Endothelial cell of umbilical vein (primary cell): ENCODE measurements at regions of chr14 and their contacts with region 1.

Region 1: DNA sequence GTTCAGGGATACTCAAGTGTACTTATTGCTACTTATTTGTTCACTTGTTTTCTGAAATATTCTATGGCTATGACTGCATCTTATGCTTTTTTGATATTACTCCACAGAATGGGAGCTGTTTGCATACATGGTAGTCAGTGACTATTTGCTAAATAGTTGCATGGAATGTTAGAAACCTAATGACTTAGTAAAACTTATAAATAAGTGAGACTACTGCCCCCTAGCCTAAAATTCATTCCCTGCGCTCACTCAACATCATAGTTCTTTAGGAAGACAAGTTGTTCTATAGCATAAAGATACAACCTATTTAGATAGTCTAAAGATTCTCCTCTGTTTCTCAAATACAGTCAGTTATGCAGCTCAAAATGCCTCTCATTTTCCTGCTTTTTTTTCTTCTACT is 305.5 kb downstream of the CEP128 start:
- DNase-seq: no peak
- H3K4me3 ChIP-seq: no peak overlapping the region
- H3K27ac ChIP-seq: no peak overlapping the region
- H3K4me1 ChIP-seq: peaks cover 38% of the 10 kb centered on the region
- H3K27me3 ChIP-seq: no peaks in the 10 kb centered on the region
- CTCF ChIP-seq: peak in 1 of 2 donors; percentile 11
- POLR2A ChIP-seq: no peak

Region 2: DNA sequence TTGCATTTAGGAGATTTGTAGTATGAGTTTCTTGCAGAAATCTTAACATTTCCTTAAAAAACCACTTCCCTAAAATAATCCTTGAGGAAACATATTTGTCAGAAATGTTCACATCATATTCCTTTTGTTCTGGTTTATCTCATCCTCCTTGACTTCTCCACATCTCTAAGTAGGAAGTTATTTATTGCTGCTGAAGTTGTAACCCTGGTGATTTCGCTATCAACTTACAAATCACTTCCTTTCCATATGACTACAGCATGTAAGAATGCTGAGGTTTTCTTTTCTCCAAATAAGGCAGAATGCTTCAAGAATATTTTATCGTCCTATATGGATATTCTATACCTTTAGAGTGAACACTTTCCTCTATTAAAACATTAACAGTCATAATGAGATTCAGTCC is 1714.2 kb before region 1 on chr14:
- CTCF ChIA-PET with region 1: no interaction called
- POLR2A ChIA-PET with region 1: no interaction called
- dilution Hi-C with region 1: no loop called
- intact Hi-C with region 1: loop called (anchors 1 kb)
- DNase-seq: peak; percentile 92
- H3K4me3 ChIP-seq: peak overlapping the region in 1 of 3 experiments; percentile 19
- H3K27ac ChIP-seq: peak overlapping the region; percentile 82
- H3K4me1 ChIP-seq: peaks cover 33% of the 10 kb centered on the region
- H3K27me3 ChIP-seq: no peaks in the 10 kb centered on the region
- CTCF ChIP-seq: no peak
- POLR2A ChIP-seq: peak; percentile 61

Region 3: DNA sequence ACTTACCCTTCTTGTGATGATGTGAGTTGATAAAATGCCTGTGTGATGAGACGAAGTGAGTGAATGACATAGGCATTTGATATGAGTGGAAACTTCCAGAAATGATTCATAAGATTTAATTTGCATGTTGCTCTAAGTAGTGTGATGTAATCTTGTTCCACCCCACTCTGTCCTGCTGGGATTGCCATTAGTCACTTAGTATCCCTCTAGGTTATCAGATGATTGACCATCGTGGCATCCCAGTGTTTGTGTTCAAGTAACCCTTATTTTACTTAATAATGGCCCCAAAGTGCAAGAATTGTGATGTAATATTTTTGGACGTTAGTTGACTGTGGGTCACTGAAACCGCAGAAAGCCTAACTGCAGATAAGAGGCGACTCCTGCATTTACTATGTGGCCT is 210.4 kb before region 1 on chr14:
- CTCF ChIA-PET with region 1: no interaction called
- POLR2A ChIA-PET with region 1: no interaction called
- dilution Hi-C with region 1: no loop called
- intact Hi-C with region 1: loop called (anchors 1 kb)
- DNase-seq: peak; percentile 85
- H3K4me3 ChIP-seq: no peak overlapping the region
- H3K27ac ChIP-seq: peak overlapping the region; percentile 48
- H3K4me1 ChIP-seq: peaks cover 17% of the 10 kb centered on the region
- H3K27me3 ChIP-seq: no peaks in the 10 kb centered on the region
- CTCF ChIP-seq: no peak
- POLR2A ChIP-seq: no peak

Region 4: GRCh38 chr14:80664576-80664975 is 28.5 kb after region 1 on chr14:
- CTCF ChIA-PET with region 1: no interaction called
- POLR2A ChIA-PET with region 1: no interaction called
- dilution Hi-C with region 1: no loop called
- intact Hi-C with region 1: loop called (anchors 2 kb)
- DNase-seq: peak; percentile 49
- H3K4me3 ChIP-seq: no peak overlapping the region
- H3K27ac ChIP-seq: peak overlapping the region; percentile 24
- H3K4me1 ChIP-seq: peaks cover 15% of the 10 kb centered on the region
- H3K27me3 ChIP-seq: no peaks in the 10 kb centered on the region
- CTCF ChIP-seq: no peak
- POLR2A ChIP-seq: no peak

Region 5: GRCh38 chr14:81220830-81221578 is 584.9 kb after region 1 on chr14 and contains the start of gene GTF2A1:
- CTCF ChIA-PET with region 1: no interaction called
- POLR2A ChIA-PET with region 1: no interaction called
- dilution Hi-C with region 1: no loop called
- intact Hi-C with region 1: loop called (anchors 5 kb)
- DNase-seq: peak; percentile 97
- H3K4me3 ChIP-seq: peak within 1 kb of the TSS; percentile 84 to 99 (median 98)
- H3K27ac ChIP-seq: peak within 1 kb of the TSS; percentile 96
- H3K4me1 ChIP-seq: peaks cover 18% of the 10 kb centered on the region
- H3K27me3 ChIP-seq: no peaks in the 10 kb centered on the region
- CTCF ChIP-seq: no peak
- POLR2A ChIP-seq: peak; percentile 99
- total RNA-seq, gene GTF2A1: 32.1 and 33.4 TPM in 2 replicates